ENCODE measurements at regions of chr2 and their contacts with region 1.

Region 1: GRCh38 chr2:182077451-182078142 is 91.9 kb downstream of the PPP1R1C start:
- DNase-seq: peak; percentile 39 to 64
- H3K4me3 ChIP-seq: no peak overlapping the region
- H3K4me3 Mint-ChIP-seq: no peak overlapping the region
- H3K27ac Mint-ChIP-seq: no peak overlapping the region
- H3K4me1 ChIP-seq: no peaks in the 10 kb centered on the region
- H3K4me1 Mint-ChIP-seq: peaks cover 6% of the 10 kb centered on the region
- H3K27me3 ChIP-seq: no peaks in the 10 kb centered on the region
- H3K27me3 Mint-ChIP-seq: no peaks in the 10 kb centered on the region
- CTCF ChIP-seq: peak; percentile 67 to 68

Region 2: DNA sequence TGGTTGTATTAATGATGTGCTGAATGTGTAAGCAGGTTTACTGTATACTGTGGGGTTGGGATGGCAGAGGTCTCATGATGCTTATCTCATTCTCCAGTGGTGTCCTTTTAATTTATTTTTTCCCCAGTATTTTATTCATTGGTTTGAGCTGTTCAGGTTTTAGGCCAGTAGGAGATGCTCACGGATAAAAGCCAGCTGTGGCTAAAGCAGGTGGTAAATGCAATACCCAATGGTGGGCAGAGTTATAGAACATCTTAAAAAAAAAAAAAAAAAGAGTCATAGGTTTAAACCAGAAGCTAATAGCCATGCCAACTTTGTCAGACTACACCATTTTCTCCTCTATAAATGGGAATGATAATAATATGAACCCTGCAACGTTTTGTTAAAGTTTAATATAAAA is 339.5 kb before region 1 on chr2:
- CTCF ChIA-PET with region 1: interaction called, 16 read pairs
- POLR2A ChIA-PET with region 1: no interaction called
- intact Hi-C with region 1: loop called (anchors 1 kb)
- DNase-seq: no peak
- H3K4me3 ChIP-seq: no peak overlapping the region
- H3K4me3 Mint-ChIP-seq: no peak overlapping the region
- H3K27ac Mint-ChIP-seq: no peak overlapping the region
- H3K4me1 ChIP-seq: no peaks in the 10 kb centered on the region
- H3K4me1 Mint-ChIP-seq: no peaks in the 10 kb centered on the region
- H3K27me3 ChIP-seq: no peaks in the 10 kb centered on the region
- H3K27me3 Mint-ChIP-seq: peaks cover 7% of the 10 kb centered on the region
- CTCF ChIP-seq: peak in 1 of 2 experiments; percentile 40

Region 3: DNA sequence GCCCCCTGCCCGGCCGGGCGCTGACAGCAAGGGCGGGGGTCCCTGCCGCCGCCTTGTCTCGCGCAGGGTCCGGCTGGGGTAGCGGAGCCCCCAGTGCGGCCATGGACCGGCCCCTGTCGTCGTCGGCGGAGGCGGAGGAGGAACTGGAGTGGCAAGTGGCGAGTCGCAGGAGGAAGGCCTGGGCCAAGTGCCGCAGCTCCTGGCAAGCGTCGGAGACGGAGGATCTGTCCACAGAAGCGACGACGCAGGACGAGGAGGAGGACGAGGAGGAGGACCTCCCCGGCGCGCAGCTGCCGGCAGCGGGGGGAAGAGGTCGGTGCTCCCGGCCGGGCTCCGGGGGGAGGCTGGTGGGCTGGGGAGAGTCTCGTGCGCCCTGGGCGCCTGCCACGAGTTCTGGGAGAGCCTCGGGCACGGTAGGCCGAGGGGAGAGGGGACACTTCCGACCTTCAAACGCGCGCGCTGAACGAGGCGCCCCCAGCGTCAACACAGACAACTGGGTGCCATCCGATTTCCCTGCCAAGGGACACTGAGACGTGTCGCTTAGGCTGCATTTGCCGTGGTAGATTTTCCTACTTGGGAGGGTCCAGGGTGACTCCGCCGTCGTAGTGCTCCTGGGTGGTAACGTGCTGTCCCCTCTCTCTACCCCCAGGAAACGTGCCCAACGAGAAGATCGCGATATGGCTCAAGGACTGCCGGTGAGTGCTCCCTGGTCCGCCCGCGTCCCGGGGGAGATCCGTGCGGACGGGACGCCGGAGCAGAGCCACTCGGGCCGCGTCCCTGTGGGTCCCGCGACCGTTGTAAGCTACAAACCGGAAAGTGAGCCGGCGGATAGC is 185.4 kb before region 1 on chr2:
- CTCF ChIA-PET with region 1: interaction called, 3 read pairs
- POLR2A ChIA-PET with region 1: no interaction called
- intact Hi-C with region 1: loop called (anchors 1 kb)
- DNase-seq: peak; percentile 68 to 78
- H3K4me3 ChIP-seq: peak overlapping the region; percentile 83
- H3K4me3 Mint-ChIP-seq: peak overlapping the region; percentile 93
- H3K27ac Mint-ChIP-seq: peak overlapping the region; percentile 91
- H3K4me1 ChIP-seq: peaks cover 33% of the 10 kb centered on the region
- H3K4me1 Mint-ChIP-seq: peaks cover 15% of the 10 kb centered on the region
- H3K27me3 ChIP-seq: no peaks in the 10 kb centered on the region
- H3K27me3 Mint-ChIP-seq: no peaks in the 10 kb centered on the region
- CTCF ChIP-seq: peak; percentile 4 to 34

Region 4: GRCh38 chr2:181953881-181954537 is 123.6 kb before region 1 on chr2:
- CTCF ChIA-PET with region 1: no interaction called
- POLR2A ChIA-PET with region 1: no interaction called
- intact Hi-C with region 1: loop called (anchors 10 kb)
- DNase-seq: no peak
- H3K4me3 ChIP-seq: no peak overlapping the region
- H3K4me3 Mint-ChIP-seq: no peak overlapping the region
- H3K27ac Mint-ChIP-seq: no peak overlapping the region
- H3K4me1 ChIP-seq: peaks cover 20% of the 10 kb centered on the region
- H3K4me1 Mint-ChIP-seq: peaks cover 23% of the 10 kb centered on the region
- H3K27me3 ChIP-seq: no peaks in the 10 kb centered on the region
- H3K27me3 Mint-ChIP-seq: no peaks in the 10 kb centered on the region
- CTCF ChIP-seq: peak in 1 of 2 experiments; percentile 21

Region 5: DNA sequence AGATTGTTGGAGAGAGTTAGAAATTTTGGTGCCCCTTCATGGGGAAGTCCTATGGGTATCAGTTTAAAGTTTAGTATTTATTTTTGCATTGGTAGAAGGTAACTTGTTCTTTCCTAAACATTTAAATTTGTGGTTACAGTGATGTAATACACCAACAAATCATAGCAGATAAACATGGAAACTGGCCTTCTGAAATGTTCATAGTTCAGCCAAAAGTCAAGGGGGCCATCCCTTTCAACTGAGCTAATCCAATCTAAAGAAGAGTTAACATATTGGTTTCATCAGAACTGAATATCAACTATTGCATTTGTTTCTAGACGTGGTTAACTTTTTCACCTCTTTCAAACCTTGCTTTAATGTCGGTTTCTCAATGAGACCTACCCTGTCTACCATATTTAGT is 45.6 kb before region 1 on chr2:
- CTCF ChIA-PET with region 1: no interaction called
- POLR2A ChIA-PET with region 1: no interaction called
- intact Hi-C with region 1: loop called (anchors 5 kb)
- DNase-seq: no peak
- H3K4me3 ChIP-seq: no peak overlapping the region
- H3K4me3 Mint-ChIP-seq: no peak overlapping the region
- H3K27ac Mint-ChIP-seq: no peak overlapping the region
- H3K4me1 ChIP-seq: no peaks in the 10 kb centered on the region
- H3K4me1 Mint-ChIP-seq: no peaks in the 10 kb centered on the region
- H3K27me3 ChIP-seq: no peaks in the 10 kb centered on the region
- H3K27me3 Mint-ChIP-seq: peaks cover 3% of the 10 kb centered on the region
- CTCF ChIP-seq: no peak

Region 6: GRCh38 chr2:182103526-182103925 is 25.9 kb after region 1 on chr2:
- CTCF ChIA-PET with region 1: no interaction called
- POLR2A ChIA-PET with region 1: no interaction called
- intact Hi-C with region 1: no loop called
- DNase-seq: no peak
- H3K4me3 ChIP-seq: no peak overlapping the region
- H3K4me3 Mint-ChIP-seq: no peak overlapping the region
- H3K27ac Mint-ChIP-seq: no peak overlapping the region
- H3K4me1 ChIP-seq: no peaks in the 10 kb centered on the region
- H3K4me1 Mint-ChIP-seq: no peaks in the 10 kb centered on the region
- H3K27me3 ChIP-seq: no peaks in the 10 kb centered on the region
- H3K27me3 Mint-ChIP-seq: no peaks in the 10 kb centered on the region
- CTCF ChIP-seq: no peak